Activated CD4-positive, alpha-beta memory T cell treated with anti-CD3 and anti-CD28 coated beads, Interleukin-2, amount 10 ng/mL, durations not matched to agents 7 days and 5 days (primary cell): ENCODE measurements at regions of chr12 and their contacts with region 1.

Region 1: DNA sequence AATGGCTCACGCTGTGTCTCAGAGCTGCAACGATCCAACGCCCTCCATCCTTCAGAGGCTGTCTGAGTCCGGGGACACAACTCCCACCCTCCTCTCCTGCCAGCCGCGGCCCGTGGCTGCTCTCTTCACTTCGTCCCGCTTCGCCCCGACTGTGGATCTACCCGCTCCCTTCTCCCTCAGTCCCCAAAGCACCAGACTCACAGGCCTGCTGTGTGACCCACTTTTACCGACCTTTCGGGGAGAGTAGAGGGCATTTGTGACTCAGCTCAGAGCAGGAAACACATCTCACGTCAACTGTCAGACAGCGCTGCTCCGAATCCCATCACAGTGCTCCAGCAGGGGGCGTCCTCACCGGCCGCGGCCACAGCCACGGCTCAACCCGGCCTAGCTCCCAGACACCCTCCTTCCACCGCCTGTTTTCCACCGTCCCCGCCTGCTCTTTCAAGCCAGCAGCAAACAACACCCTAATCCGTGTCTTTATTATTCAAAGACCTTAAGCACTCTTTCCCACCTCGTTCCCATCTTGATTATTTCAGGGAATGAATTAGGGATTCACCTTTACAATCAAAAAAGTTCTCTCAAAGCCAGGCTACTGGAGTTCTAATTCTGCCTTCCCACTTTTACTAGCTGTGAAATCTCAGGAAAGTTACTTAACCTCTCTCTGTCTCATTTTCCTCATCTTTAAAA is 5.0 kb upstream of the AQP2 start:
- DNase-seq: peak; percentile 89
- H3K4me3 Mint-ChIP-seq: peak overlapping the region; percentile 82
- H3K27ac Mint-ChIP-seq: peak overlapping the region; percentile 90
- H3K4me1 Mint-ChIP-seq: peaks cover 55% of the 10 kb centered on the region
- H3K27me3 Mint-ChIP-seq: peaks cover 4% of the 10 kb centered on the region

Region 2: GRCh38 chr12:49930515-49931288 is 14.8 kb before region 1 on chr12:
- CTCF ChIA-PET with region 1: interaction called, 59 read pairs
- POLR2A ChIA-PET with region 1: no interaction called
- DNase-seq: no peak
- H3K4me3 Mint-ChIP-seq: no peak overlapping the region
- H3K27ac Mint-ChIP-seq: no peak overlapping the region
- H3K4me1 Mint-ChIP-seq: peaks cover 6% of the 10 kb centered on the region
- H3K27me3 Mint-ChIP-seq: peaks cover 15% of the 10 kb centered on the region

Region 3: GRCh38 chr12:49959570-49960465 is 14.3 kb after region 1 on chr12:
- CTCF ChIA-PET with region 1: interaction called, 86 read pairs
- POLR2A ChIA-PET with region 1: interaction called, 4 read pairs
- DNase-seq: no peak
- H3K4me3 Mint-ChIP-seq: no peak overlapping the region
- H3K27ac Mint-ChIP-seq: no peak overlapping the region
- H3K4me1 Mint-ChIP-seq: peaks cover 7% of the 10 kb centered on the region
- H3K27me3 Mint-ChIP-seq: peaks cover 86% of the 10 kb centered on the region

Region 4: GRCh38 chr12:50201978-50202521 is 256.5 kb after region 1 on chr12:
- CTCF ChIA-PET with region 1: no interaction called
- POLR2A ChIA-PET with region 1: no interaction called
- DNase-seq: no peak
- H3K4me3 Mint-ChIP-seq: no peak overlapping the region
- H3K27ac Mint-ChIP-seq: no peak overlapping the region
- H3K4me1 Mint-ChIP-seq: peaks cover 3% of the 10 kb centered on the region
- H3K27me3 Mint-ChIP-seq: no peaks in the 10 kb centered on the region